IMR-90 (cell line): ENCODE measurements at regions of chr11 and their contacts with region 1.

Region 1: DNA sequence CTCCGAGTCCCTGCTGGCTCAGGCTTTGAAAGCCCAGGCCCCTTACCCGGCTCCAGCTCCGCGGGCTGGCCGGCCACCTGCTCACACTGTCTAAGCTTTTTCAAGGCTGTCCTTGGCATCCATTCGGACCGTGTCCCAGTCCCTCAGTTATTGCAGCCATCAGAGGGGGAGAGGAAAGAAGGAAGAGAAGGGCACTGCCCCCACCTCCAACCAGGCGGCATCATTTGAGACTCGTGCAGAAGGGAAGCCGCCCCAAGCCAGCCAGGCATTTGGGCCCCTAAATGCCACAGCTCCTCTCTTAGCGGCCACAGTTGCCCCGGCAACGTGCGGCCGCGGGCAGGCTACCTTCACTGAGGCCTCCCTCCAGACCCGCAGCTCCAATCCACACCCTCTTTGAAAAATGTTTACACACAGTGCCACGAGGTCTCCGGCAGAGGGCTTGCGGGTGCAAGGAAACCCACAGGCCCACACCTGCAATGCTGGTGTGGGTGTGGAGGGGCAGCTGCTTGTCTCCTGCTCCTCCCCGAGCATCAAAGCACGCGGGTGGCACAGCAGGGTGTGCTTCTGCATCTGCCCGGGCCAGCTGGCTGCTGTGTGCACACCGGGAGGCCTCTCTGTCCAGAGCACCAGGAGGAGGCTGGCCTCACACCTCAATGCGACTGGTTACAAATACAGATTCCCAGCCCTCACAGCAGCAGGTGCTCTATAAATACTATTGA is 124.4 kb downstream of the CTTN start:
- DNase-seq: no peak
- ATAC-seq: no peak
- H3K4me3 ChIP-seq: no peak overlapping the region
- H3K27ac ChIP-seq: no peak overlapping the region
- H3K4me1 ChIP-seq: peaks cover 6% of the 10 kb centered on the region; the same call in 1 of the 2 replicates
- H3K27me3 ChIP-seq: peaks cover 17% of the 10 kb centered on the region
- CTCF ChIP-seq: no peak
- POLR2A ChIP-seq: no peak
- RAD21 ChIP-seq: no peak

Region 2: DNA sequence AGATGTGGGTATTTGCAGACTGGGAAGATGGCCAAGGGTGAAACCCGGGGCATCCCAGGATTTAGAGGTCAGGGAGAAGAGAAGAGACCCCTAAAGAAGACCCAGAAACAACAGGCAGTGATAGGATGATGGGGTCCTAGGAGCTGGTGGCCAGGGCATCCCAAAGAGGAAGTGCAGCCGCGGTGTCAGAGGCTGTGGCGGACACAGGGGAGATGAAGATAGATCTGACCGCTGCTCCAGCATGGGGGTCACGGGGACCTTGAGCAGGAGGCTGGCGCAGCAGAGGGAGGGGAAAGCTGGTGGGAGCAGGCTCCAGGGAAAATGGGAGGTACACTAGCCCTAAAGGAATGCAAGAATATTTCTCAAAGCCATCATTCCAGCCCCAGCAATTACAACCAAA is 77.1 kb before region 1 on chr11:
- CTCF ChIA-PET with region 1: no interaction called
- POLR2A ChIA-PET with region 1: no interaction called
- dilution Hi-C with region 1: no loop called
- in situ Hi-C with region 1: no loop called
- intact Hi-C with region 1: loop called (anchors 2 kb)
- DNase-seq: peak; percentile 10
- ATAC-seq: peak; percentile 52
- H3K4me3 ChIP-seq: no peak overlapping the region
- H3K27ac ChIP-seq: no peak overlapping the region
- H3K4me1 ChIP-seq: no peaks in the 10 kb centered on the region
- H3K27me3 ChIP-seq: no peaks in the 10 kb centered on the region
- CTCF ChIP-seq: no peak
- POLR2A ChIP-seq: no peak
- RAD21 ChIP-seq: no peak

Region 3: DNA sequence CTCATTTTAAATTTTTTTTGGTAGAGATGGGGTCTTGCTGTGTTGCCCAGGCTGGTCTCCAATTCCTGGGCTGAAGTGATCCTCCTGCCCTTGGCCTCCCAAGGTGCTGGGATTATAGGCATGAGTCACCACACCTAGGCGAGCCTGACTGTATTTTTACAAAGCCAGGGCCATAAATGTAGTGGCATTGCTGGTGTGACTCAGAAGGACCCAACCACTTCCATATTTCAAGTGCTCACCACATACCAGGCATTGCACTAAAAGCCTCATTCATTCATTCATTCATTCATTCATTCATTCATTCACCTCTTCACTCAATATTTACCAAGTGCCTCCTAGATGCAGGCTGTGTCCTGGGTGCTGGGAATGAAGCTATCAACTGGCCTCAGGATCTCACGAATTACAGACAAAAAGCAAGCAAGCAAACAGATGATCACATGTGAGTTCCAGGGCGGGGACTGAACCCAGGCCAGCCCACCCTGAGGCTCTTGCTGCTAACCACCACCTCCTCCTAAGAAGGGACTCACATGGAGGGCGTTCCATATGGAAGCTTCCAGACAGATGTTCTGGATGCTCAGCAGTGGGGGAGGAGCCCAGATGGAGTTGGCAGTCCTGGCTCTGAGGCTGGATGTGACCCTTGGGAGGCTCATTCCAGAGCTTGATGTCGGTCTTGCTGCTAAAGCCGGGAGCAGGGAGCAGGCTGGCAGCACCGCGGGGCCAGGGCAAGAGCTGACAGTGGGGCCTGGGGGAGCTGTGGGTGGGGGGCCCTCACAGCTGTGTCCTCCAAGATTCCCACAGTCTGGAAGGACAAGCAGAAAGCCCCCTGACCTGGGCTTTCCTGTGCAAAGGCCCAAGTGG is 34.4 kb after region 1 on chr11:
- CTCF ChIA-PET with region 1: no interaction called
- POLR2A ChIA-PET with region 1: no interaction called
- dilution Hi-C with region 1: no loop called
- in situ Hi-C with region 1: no loop called
- intact Hi-C with region 1: loop called (anchors 5 kb)
- DNase-seq: no peak
- ATAC-seq: peak; percentile 59
- H3K4me3 ChIP-seq: no peak overlapping the region
- H3K27ac ChIP-seq: no peak overlapping the region
- H3K4me1 ChIP-seq: no peaks in the 10 kb centered on the region
- H3K27me3 ChIP-seq: no peaks in the 10 kb centered on the region; the same call in 1 of the 2 replicates
- CTCF ChIP-seq: no peak
- POLR2A ChIP-seq: no peak
- RAD21 ChIP-seq: no peak

Region 4: GRCh38 chr11:70580036-70580845 is 57.5 kb after region 1 on chr11:
- CTCF ChIA-PET with region 1: no interaction called
- POLR2A ChIA-PET with region 1: no interaction called
- dilution Hi-C with region 1: no loop called
- in situ Hi-C with region 1: no loop called
- intact Hi-C with region 1: loop called (anchors 10 kb)
- DNase-seq: no peak
- ATAC-seq: peak; percentile 61
- H3K4me3 ChIP-seq: no peak overlapping the region
- H3K27ac ChIP-seq: no peak overlapping the region
- H3K4me1 ChIP-seq: no peaks in the 10 kb centered on the region
- H3K27me3 ChIP-seq: no peaks in the 10 kb centered on the region; the same call in 1 of the 2 replicates
- CTCF ChIP-seq: no peak
- POLR2A ChIP-seq: no peak
- RAD21 ChIP-seq: no peak

Region 5: GRCh38 chr11:70742553-70743291 is 220.0 kb after region 1 on chr11:
- CTCF ChIA-PET with region 1: no interaction called
- POLR2A ChIA-PET with region 1: no interaction called
- dilution Hi-C with region 1: no loop called
- in situ Hi-C with region 1: no loop called
- intact Hi-C with region 1: no loop called
- DNase-seq: no peak
- ATAC-seq: peak; percentile 58
- H3K4me3 ChIP-seq: no peak overlapping the region
- H3K27ac ChIP-seq: no peak overlapping the region
- H3K4me1 ChIP-seq: no peaks in the 10 kb centered on the region
- H3K27me3 ChIP-seq: peaks cover 4% of the 10 kb centered on the region; the same call in 1 of the 2 replicates
- CTCF ChIP-seq: no peak
- POLR2A ChIP-seq: no peak
- RAD21 ChIP-seq: no peak